ENCODE measurements at regions of chr5 and their contacts with region 1.

Region 1: GRCh38 chr5:103166706-103167105 is 46.6 kb downstream of the PPIP5K2 start:
- DNase-seq: no peak
- ATAC-seq: no peak
- H3K4me3 ChIP-seq: no peak overlapping the region
- H3K4me3 Mint-ChIP-seq: no peak overlapping the region
- H3K27ac ChIP-seq: no peak overlapping the region
- H3K27ac Mint-ChIP-seq: no peak overlapping the region
- H3K4me1 ChIP-seq: no peaks in the 10 kb centered on the region
- H3K4me1 Mint-ChIP-seq: no peaks in the 10 kb centered on the region
- H3K27me3 ChIP-seq: no peaks in the 10 kb centered on the region
- H3K27me3 Mint-ChIP-seq: no peaks in the 10 kb centered on the region

Region 2: GRCh38 chr5:103132684-103133083 is 34.0 kb before region 1 on chr5:
- CTCF ChIA-PET with region 1: interaction called in 1 of 2 experiments, 5 read pairs
- POLR2A ChIA-PET with region 1: interaction called in 1 of 2 experiments, 12 read pairs
- DNase-seq: no peak
- ATAC-seq: no peak
- H3K4me3 ChIP-seq: no peak overlapping the region
- H3K4me3 Mint-ChIP-seq: no peak overlapping the region
- H3K27ac ChIP-seq: no peak overlapping the region
- H3K27ac Mint-ChIP-seq: peak overlapping the region in 1 of 2 donors; percentile 61
- H3K4me1 ChIP-seq: no peaks in the 10 kb centered on the region
- H3K4me1 Mint-ChIP-seq: peaks cover 37 to 45% (median 40%) of the 10 kb centered on the region in 3 donors
- H3K27me3 ChIP-seq: no peaks in the 10 kb centered on the region
- H3K27me3 Mint-ChIP-seq: no peaks in the 10 kb centered on the region

Region 3: DNA sequence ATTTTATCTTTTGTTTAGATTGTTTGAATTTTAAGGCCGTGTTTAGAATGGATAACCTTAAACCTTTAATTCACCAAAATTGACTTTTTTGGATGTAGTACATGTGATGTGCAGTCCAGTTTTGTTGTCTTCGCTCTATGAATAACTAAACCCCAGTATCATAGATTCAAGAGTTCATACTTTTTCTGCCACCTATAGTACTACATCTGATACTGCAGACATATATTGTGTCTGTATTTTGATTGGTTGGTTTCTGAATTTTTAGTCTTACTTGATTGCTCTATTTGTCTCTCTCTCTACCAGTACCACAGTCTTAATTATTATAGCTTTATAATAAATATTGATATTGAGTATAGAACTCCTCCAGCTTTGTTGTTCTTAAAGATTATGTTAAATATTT is 11.5 kb after region 1 on chr5:
- CTCF ChIA-PET with region 1: no interaction called
- POLR2A ChIA-PET with region 1: no interaction called
- DNase-seq: no peak
- ATAC-seq: no peak
- H3K4me3 ChIP-seq: no peak overlapping the region
- H3K4me3 Mint-ChIP-seq: no peak overlapping the region
- H3K27ac ChIP-seq: no peak overlapping the region
- H3K27ac Mint-ChIP-seq: no peak overlapping the region
- H3K4me1 ChIP-seq: no peaks in the 10 kb centered on the region
- H3K4me1 Mint-ChIP-seq: no peaks in the 10 kb centered on the region
- H3K27me3 ChIP-seq: no peaks in the 10 kb centered on the region
- H3K27me3 Mint-ChIP-seq: no peaks in the 10 kb centered on the region